Gastrocnemius medialis (tissue), 4 donors: ENCODE measurements at regions of chr1 and their contacts with region 1.

Region 1: GRCh38 chr1:25796811-25797458 is 3.1 kb upstream of the SELENON start:
- DNase-seq: peak; percentile 49 to 78
- ATAC-seq: peak; percentile 60 to 62
- H3K4me3 ChIP-seq: peak overlapping the region; percentile 19 to 38 (median 36)
- H3K27ac ChIP-seq: peak overlapping the region; percentile 88 to 91 (median 90)
- H3K4me1 ChIP-seq: peaks cover 53 to 65% of the 10 kb centered on the region in 2 donors
- H3K27me3 ChIP-seq: no peaks in the 10 kb centered on the region
- CTCF ChIP-seq: peak; percentile 80 to 90 (median 85)
- POLR2A ChIP-seq: no peak

Region 2: GRCh38 chr1:25430666-25431505 is 366.0 kb before region 1 on chr1 and contains the start of gene MACO1:
- in situ Hi-C with region 1: no loop called
- intact Hi-C with region 1: loop called (anchors 10 kb)
- DNase-seq: peak; percentile 98 to 99
- ATAC-seq: peak; percentile 88 to 91
- H3K4me3 ChIP-seq: peak within 1 kb of the TSS; percentile 76 to 89 (median 86)
- H3K27ac ChIP-seq: peak within 1 kb of the TSS; percentile 92 to 99 (median 97)
- H3K4me1 ChIP-seq: peaks cover 41 to 42% of the 10 kb centered on the region in 2 donors
- H3K27me3 ChIP-seq: no peaks in the 10 kb centered on the region
- CTCF ChIP-seq: no peak
- POLR2A ChIP-seq: peak; percentile 71 to 80
- total RNA-seq, gene MACO1: 38.8 to 74.6 (median 44.8) TPM

Region 3: DNA sequence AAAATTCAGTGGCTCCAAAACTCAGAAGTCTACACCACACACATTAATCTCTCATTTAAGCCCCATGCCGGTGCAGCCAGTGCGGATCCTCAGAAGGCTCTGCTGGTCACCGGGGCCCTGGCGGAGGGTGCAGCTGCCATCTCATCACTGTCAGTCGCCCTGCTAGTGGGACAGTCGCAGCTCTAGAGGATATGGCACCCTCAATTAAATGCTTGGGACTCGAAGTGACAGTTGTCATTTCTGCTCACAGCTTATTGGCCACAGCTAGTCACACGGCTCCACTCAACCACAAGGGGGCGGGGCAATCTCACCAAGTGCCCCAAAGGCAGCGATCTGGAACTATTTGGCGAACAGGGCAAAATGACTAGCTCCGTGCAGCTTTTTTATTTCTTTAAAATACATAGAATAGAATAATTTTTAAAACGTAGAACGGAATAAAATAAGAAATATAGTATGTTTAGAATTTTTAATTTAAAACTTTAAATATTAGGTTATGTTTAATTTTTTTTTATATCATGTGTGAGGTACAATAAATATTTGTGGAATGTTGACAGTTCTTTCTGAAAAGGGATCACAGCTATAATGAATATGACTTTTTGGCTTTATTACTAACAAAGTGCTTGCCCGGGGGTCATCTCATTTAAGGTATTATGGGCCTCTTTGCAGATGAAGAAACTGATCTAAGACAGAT is 188.3 kb before region 1 on chr1:
- in situ Hi-C with region 1: loop called (anchors 5 kb)
- intact Hi-C with region 1: loop called (anchors 1 kb)
- DNase-seq: peak; percentile 81 to 87
- ATAC-seq: peak; percentile 98 to 99
- H3K4me3 ChIP-seq: peak overlapping the region; percentile 36 to 55 (median 44)
- H3K27ac ChIP-seq: peak overlapping the region; percentile 49 to 74 (median 64)
- H3K4me1 ChIP-seq: no peaks in the 10 kb centered on the region
- H3K27me3 ChIP-seq: no peaks in the 10 kb centered on the region
- CTCF ChIP-seq: peak; percentile 38 to 88 (median 84)
- POLR2A ChIP-seq: peak in 1 of 2 donors; percentile 12

Region 4: DNA sequence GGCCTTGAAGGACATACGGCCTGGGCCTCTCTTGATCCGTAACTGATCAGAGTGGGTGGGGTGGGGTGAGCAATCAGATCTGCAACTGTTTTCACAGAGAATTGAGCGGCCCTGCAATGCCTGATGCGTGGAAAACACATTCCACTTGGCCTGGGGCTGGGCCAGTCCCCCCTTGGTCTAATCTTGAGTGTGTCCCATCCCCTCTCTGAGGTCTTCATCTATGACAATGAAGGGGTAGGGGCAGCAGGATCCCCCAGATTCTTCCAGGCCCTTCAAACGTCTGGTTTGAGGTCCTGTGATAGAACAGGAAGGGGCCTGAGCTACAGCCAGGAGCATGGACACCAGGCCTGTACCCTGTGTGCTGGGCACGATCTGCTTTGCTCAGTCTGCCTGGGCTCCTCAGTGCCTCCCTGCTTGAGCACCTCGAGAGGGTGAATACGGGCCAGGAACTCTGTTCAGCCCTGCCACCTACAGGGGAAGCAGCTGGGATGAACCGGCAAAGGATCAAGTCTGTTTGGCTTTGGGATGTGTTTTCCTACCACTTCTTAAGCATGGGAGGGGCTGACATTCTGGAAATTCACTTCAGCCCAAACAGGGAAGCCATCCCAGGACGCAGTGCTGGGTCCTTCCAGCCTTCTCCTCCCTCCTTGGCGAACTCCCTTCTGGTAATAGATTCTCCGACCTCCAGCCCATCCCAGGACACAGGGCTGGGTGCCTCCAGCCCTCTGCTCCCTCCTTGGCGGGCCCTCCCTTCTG is 52.9 kb before region 1 on chr1:
- in situ Hi-C with region 1: loop called in 1 of 4 experiments (anchors 10 kb)
- intact Hi-C with region 1: loop called (anchors 1 kb)
- DNase-seq: peak; percentile 73 to 86
- ATAC-seq: peak; percentile 86 to 88
- H3K4me3 ChIP-seq: no peak overlapping the region
- H3K27ac ChIP-seq: peak overlapping the region; percentile 90 to 95 (median 94)
- H3K4me1 ChIP-seq: peaks cover 31 to 32% of the 10 kb centered on the region in 2 donors
- H3K27me3 ChIP-seq: no peaks in the 10 kb centered on the region
- CTCF ChIP-seq: peak; percentile 42 to 65 (median 55)
- POLR2A ChIP-seq: no peak